AG04450 (cell line): ENCODE measurements at regions of chr15 and their contacts with region 1.

Region 1: GRCh38 chr15:61169904-61170695 is 59.0 kb downstream of the RORA start:
- DNase-seq: no peak
- H3K4me3 ChIP-seq: no peak overlapping the region
- H3K27ac ChIP-seq: no peak overlapping the region
- H3K27me3 ChIP-seq: no peaks in the 10 kb centered on the region
- CTCF ChIP-seq: no peak

Region 2: GRCh38 chr15:60576044-60576443 is 594.1 kb before region 1 on chr15:
- CTCF ChIA-PET with region 1: interaction called, 12 read pairs
- POLR2A ChIA-PET with region 1: no interaction called
- DNase-seq: no peak
- H3K4me3 ChIP-seq: no peak overlapping the region
- H3K27ac ChIP-seq: no peak overlapping the region
- H3K27me3 ChIP-seq: peaks cover 2% of the 10 kb centered on the region
- CTCF ChIP-seq: no peak

Region 3: GRCh38 chr15:61038387-61038786 is 131.7 kb before region 1 on chr15:
- CTCF ChIA-PET with region 1: no interaction called
- POLR2A ChIA-PET with region 1: no interaction called
- DNase-seq: no peak
- H3K4me3 ChIP-seq: no peak overlapping the region
- H3K27ac ChIP-seq: no peak overlapping the region
- H3K27me3 ChIP-seq: no peaks in the 10 kb centered on the region
- CTCF ChIP-seq: no peak

Region 4: DNA sequence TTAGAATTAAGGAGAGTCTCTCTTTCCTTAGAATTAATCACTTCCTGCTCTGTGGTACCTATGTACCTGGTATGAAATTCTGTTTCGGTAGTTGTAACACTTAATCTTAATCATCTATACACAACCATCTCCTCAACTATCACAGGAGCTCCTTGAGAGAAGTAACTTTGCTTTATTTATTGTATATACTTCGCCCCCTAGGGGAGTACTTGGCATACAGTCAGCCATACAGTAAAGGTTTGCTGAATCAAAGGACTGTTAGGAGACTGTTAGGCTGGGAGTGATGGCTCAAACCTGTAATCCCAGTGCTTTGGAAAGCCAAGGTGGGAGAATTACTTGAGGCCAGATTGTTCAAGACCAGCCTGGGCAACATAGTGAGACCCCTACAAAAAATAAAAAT is 14.3 kb after region 1 on chr15:
- CTCF ChIA-PET with region 1: interaction called, 10 read pairs
- POLR2A ChIA-PET with region 1: no interaction called
- DNase-seq: no peak
- H3K4me3 ChIP-seq: no peak overlapping the region
- H3K27ac ChIP-seq: no peak overlapping the region
- H3K27me3 ChIP-seq: peaks cover 4% of the 10 kb centered on the region
- CTCF ChIP-seq: no peak

Region 5: GRCh38 chr15:61275901-61276300 is 105.8 kb after region 1 on chr15:
- CTCF ChIA-PET with region 1: no interaction called
- POLR2A ChIA-PET with region 1: no interaction called
- DNase-seq: no peak
- H3K4me3 ChIP-seq: no peak overlapping the region
- H3K27ac ChIP-seq: no peak overlapping the region
- H3K27me3 ChIP-seq: peaks cover 2% of the 10 kb centered on the region
- CTCF ChIP-seq: no peak